Naive thymus-derived CD4-positive, alpha-beta T cell (primary cell): ENCODE measurements at regions of chr7 and their contacts with region 1.

Region 1: DNA sequence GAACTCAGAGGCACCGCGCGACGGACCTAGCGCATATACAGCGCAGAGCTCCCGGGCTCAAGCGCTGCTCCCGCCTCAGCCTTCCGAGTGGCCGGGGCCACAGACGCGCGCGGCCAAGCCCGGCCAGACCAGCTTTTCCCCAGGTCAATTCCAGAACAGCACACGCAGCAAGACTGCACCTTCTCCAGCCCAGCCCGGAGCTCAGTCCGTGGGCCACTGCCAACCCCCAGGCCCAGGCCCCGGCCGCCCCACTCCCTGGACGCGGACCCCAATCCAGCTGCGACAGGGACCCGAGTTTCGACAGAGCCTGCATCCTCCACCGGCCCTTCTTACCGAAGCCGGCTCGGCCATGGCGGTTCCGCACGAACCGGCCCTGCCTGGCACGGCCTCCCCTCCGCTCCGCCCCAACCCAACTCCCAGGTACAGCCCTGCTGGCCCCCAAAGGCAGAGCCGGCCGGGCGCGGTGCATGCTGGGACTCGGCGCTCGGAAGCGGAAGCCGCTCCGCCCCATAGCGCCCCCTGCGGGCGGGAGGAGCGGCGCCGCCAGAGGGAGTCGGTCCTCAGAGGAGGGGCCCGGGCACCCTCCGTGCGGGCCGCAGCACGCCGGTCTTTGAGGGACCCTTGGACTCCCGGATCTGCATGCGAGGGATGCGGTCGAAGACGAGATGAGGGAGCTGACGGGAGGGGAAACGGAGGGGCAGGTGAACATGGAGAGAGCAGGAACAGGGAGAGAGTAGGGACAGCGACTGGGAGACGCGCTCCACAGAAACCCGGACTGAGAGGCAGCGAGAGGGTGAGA is at the start of gene ZNF425:
- DNase-seq: peak; percentile 87 to 98 (median 92)
- ATAC-seq: peak; percentile 98
- H3K4me3 ChIP-seq: peak within 1 kb of the TSS; percentile 99
- H3K4me3 Mint-ChIP-seq: peak within 1 kb of the TSS; percentile 91 to 100 (median 100)
- H3K27ac ChIP-seq: peak within 1 kb of the TSS; percentile 91
- H3K27ac Mint-ChIP-seq: peak within 1 kb of the TSS; percentile 90 to 100 (median 98)
- H3K4me1 ChIP-seq: no peaks in the 10 kb centered on the region
- H3K4me1 Mint-ChIP-seq: peaks cover 19 to 28% (median 22%) of the 10 kb centered on the region in 7 donors
- H3K27me3 ChIP-seq: no peaks in the 10 kb centered on the region
- H3K27me3 Mint-ChIP-seq: no peaks in the 10 kb centered on the region
- total RNA-seq, gene ZNF425: 0.61 to 4.9 (median 1.0) TPM

Region 2: GRCh38 chr7:148867596-148868377 is 258.3 kb before region 1 on chr7:
- CTCF ChIA-PET with region 1: no interaction called
- POLR2A ChIA-PET with region 1: no interaction called
- intact Hi-C with region 1: no loop called
- DNase-seq: no peak
- ATAC-seq: no peak
- H3K4me3 ChIP-seq: no peak overlapping the region
- H3K4me3 Mint-ChIP-seq: no peak overlapping the region
- H3K27ac ChIP-seq: no peak overlapping the region
- H3K27ac Mint-ChIP-seq: peak overlapping the region in 1 of 9 donors; percentile 16
- H3K4me1 ChIP-seq: peaks cover 0 to 4% of the 10 kb centered on the region in 2 donors
- H3K4me1 Mint-ChIP-seq: peaks cover 11 to 60% (median 23%) of the 10 kb centered on the region in 7 donors
- H3K27me3 ChIP-seq: no peaks in the 10 kb centered on the region
- H3K27me3 Mint-ChIP-seq: no peaks in the 10 kb centered on the region

Region 3: DNA sequence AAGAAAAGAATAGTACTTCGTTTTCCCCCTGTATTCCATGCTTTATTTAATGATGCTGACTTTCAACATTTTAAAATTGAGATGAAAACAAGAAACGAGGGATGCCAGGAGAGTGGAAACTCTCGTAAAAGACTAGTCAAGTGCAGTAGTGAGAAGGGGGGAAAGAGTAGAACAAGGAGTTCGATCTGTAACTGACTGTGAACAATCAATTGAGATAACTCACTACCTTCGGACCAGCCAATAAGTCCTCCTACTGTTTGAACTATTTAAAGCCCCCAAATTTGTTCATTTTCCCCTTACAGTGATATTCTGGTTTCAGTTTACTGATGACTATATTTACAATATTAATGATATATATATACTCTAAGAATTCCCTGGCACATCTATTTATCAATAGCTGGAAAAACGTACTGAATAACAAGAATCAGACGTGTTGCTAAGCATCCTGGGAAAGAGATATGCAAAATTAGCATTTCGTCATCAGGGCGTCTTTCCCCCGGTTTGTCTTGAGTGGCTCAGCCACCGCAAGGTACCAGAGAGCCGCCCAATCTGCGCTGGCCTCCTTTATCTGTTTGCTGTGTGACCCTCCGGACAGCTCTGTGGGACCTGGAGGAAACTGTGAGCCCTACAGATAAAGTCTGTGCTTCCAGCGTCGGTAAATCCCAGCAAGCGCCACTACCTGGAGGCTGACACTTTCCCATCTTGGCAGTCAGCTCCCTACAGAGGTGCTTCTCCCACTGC is 138.9 kb before region 1 on chr7:
- CTCF ChIA-PET with region 1: no interaction called
- POLR2A ChIA-PET with region 1: no interaction called
- intact Hi-C with region 1: loop called (anchors 1 to 2 kb)
- DNase-seq: peak; percentile 43 to 91 (median 88)
- ATAC-seq: peak; percentile 87
- H3K4me3 ChIP-seq: peak overlapping the region; percentile 97
- H3K4me3 Mint-ChIP-seq: peak overlapping the region; percentile 92 to 99 (median 98)
- H3K27ac ChIP-seq: peak overlapping the region; percentile 85
- H3K27ac Mint-ChIP-seq: peak overlapping the region; percentile 90 to 97 (median 96)
- H3K4me1 ChIP-seq: peaks cover 26% of the 10 kb centered on the region in 2 donors
- H3K4me1 Mint-ChIP-seq: peaks cover 26 to 53% (median 48%) of the 10 kb centered on the region in 7 donors
- H3K27me3 ChIP-seq: no peaks in the 10 kb centered on the region
- H3K27me3 Mint-ChIP-seq: peaks cover 0 to 27% (median 0%) of the 10 kb centered on the region in 5 donors

Region 4: GRCh38 chr7:149195180-149196150 is 69.4 kb after region 1 on chr7 and contains the start of gene ZNF282:
- CTCF ChIA-PET with region 1: no interaction called
- POLR2A ChIA-PET with region 1: no interaction called
- intact Hi-C with region 1: loop called (anchors 1 to 2 kb)
- DNase-seq: peak; percentile 43 to 84 (median 56)
- ATAC-seq: peak; percentile 91
- H3K4me3 ChIP-seq: peak within 1 kb of the TSS; percentile 82
- H3K4me3 Mint-ChIP-seq: peak within 1 kb of the TSS; percentile 83 to 94 (median 90)
- H3K27ac ChIP-seq: peak within 1 kb of the TSS; percentile 77
- H3K27ac Mint-ChIP-seq: peak within 1 kb of the TSS; percentile 79 to 97 (median 86)
- H3K4me1 ChIP-seq: peaks cover 6 to 8% of the 10 kb centered on the region in 2 donors
- H3K4me1 Mint-ChIP-seq: peaks cover 20 to 52% (median 47%) of the 10 kb centered on the region in 7 donors
- H3K27me3 ChIP-seq: no peaks in the 10 kb centered on the region
- H3K27me3 Mint-ChIP-seq: peaks cover 0 to 3% (median 0%) of the 10 kb centered on the region in 5 donors
- total RNA-seq, gene ZNF282: 12.1 to 36.7 (median 15.1) TPM

Region 5: GRCh38 chr7:149261829-149262617 is 136.0 kb after region 1 on chr7 and contains the start of gene ZNF783:
- CTCF ChIA-PET with region 1: no interaction called
- POLR2A ChIA-PET with region 1: interaction called, 4 read pairs
- intact Hi-C with region 1: loop called (anchors 1 kb)
- DNase-seq: peak; percentile 77 to 88 (median 86)
- ATAC-seq: peak; percentile 97
- H3K4me3 ChIP-seq: peak within 1 kb of the TSS; percentile 74
- H3K4me3 Mint-ChIP-seq: peak within 1 kb of the TSS; percentile 83 to 91 (median 88)
- H3K27ac ChIP-seq: peak within 1 kb of the TSS; percentile 71
- H3K27ac Mint-ChIP-seq: peak within 1 kb of the TSS; percentile 84 to 93 (median 90)
- H3K4me1 ChIP-seq: peaks cover 19 to 20% of the 10 kb centered on the region in 2 donors
- H3K4me1 Mint-ChIP-seq: peaks cover 22 to 46% (median 32%) of the 10 kb centered on the region in 7 donors
- H3K27me3 ChIP-seq: no peaks in the 10 kb centered on the region
- H3K27me3 Mint-ChIP-seq: no peaks in the 10 kb centered on the region
- total RNA-seq, gene ZNF783: 23.3 to 49.2 (median 36.0) TPM

Region 6: DNA sequence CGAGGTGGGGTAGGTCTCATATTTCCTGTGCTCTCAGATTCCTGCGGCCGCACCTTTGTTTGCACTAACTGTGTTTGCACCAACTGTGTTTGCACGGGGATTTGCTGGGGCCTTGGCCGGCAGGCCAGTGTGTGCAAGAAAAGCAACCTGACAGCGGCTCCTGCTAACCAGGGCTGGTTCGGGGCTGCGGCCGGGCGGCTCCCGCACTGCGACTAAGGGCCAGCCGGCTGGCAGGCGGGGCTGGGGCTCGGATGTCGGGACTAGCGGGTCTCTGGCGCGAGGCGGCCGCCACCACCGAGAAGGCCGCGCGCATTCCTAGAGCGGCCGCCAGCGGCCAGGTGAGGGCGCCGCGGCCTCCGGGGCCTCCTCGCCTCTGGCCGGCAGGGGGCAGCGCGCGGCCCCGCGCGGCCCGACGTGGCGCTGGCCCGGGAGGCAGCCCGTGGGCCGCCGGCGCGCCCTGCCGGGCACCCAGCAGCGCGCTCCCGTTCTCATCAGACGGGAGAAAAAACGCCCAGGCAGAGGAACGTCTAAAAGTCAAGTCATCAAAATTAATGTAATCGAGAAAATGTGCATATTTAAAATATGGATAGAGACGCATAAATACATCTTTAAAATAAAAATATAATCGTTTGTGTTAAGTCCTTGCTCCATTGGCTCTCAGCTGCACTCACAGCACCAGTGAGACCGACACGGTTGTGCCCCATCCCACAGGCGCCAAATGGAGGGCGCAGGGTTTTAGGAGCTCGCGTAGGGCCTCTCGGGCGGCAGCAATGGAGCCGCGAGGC is 296.3 kb after region 1 on chr7:
- CTCF ChIA-PET with region 1: no interaction called
- POLR2A ChIA-PET with region 1: interaction called, 6 read pairs
- intact Hi-C with region 1: loop called (anchors 1 kb)
- DNase-seq: peak; percentile 25 to 85 (median 75)
- ATAC-seq: peak; percentile 99
- H3K4me3 ChIP-seq: peak overlapping the region; percentile 75
- H3K4me3 Mint-ChIP-seq: peak overlapping the region; percentile 69 to 80 (median 76)
- H3K27ac ChIP-seq: peak overlapping the region; percentile 77
- H3K27ac Mint-ChIP-seq: peak overlapping the region in 8 of 9 donors; percentile 68 to 84 (median 81)
- H3K4me1 ChIP-seq: no peaks in the 10 kb centered on the region
- H3K4me1 Mint-ChIP-seq: peaks cover 0 to 17% (median 7%) of the 10 kb centered on the region in 7 donors
- H3K27me3 ChIP-seq: no peaks in the 10 kb centered on the region
- H3K27me3 Mint-ChIP-seq: peaks cover 0 to 14% (median 0%) of the 10 kb centered on the region in 5 donors

Region 7: GRCh38 chr7:149497456-149498261 is 371.6 kb after region 1 on chr7 and contains the start of gene ZNF746:
- CTCF ChIA-PET with region 1: no interaction called
- POLR2A ChIA-PET with region 1: no interaction called
- intact Hi-C with region 1: loop called (anchors 1 to 2 kb)
- DNase-seq: peak; percentile 57 to 85 (median 76)
- ATAC-seq: peak; percentile 96
- H3K4me3 ChIP-seq: peak within 1 kb of the TSS; percentile 67
- H3K4me3 Mint-ChIP-seq: peak within 1 kb of the TSS; percentile 92 to 99 (median 96)
- H3K27ac ChIP-seq: peak within 1 kb of the TSS; percentile 82
- H3K27ac Mint-ChIP-seq: peak within 1 kb of the TSS; percentile 84 to 97 (median 95)
- H3K4me1 ChIP-seq: peaks cover 19 to 27% of the 10 kb centered on the region in 2 donors
- H3K4me1 Mint-ChIP-seq: peaks cover 21 to 46% (median 30%) of the 10 kb centered on the region in 7 donors
- H3K27me3 ChIP-seq: no peaks in the 10 kb centered on the region
- H3K27me3 Mint-ChIP-seq: peaks cover 0 to 3% (median 0%) of the 10 kb centered on the region in 5 donors
- total RNA-seq, gene ZNF746: 23.6 to 32.0 (median 24.4) TPM